ENCODE measurements at regions of chr20 and their contacts with region 1.

Region 1: GRCh38 chr20:38485041-38485440 is 12.4 kb downstream of the RALGAPB start:
- DNase-seq: no peak
- ATAC-seq: no peak

Region 2: DNA sequence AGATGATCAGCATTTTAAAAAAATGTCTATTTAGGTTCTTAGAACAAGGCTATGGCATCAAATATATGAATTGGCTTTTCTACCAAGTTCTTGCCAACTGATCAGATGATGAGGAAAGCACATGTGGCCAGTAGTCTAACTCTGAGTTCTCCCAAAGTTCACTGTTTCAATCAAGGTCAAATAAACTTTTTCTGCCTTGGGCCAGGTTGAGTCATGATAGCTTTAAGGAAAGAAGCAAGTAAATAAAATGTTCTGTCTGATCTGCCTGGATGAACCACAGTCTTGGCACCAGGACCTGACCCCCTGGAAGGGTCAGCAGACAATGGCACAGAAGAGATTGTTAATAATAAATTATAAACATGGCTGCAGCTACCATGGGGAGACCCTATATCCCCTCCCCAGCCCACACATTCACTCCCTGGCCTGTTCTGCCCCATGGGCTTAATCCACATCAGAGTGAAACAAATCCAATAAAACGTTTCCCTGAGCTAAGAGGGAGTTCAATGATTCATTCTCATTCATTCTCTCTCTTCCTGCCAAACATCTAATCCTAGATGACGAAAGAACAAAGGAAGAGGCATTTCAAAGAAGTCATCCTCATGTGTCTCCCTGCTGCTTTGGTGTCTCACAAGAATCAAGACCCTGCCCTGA is 1138.7 kb after region 1 on chr20:
- intact Hi-C with region 1: loop called in 1 of 2 experiments (anchors 10 kb)
- DNase-seq: no peak
- ATAC-seq: no peak

Measured in left colon (tissue), 2 donors.